Dendritic cell treated with granulocyte-macrophage colony-stimulating factor and Interleukin-4, amounts not matched to agents 40 ng/mL and 50 ng/mL, for 4 days (primary cell): ENCODE measurements at regions of chr6 and their contacts with region 1.

Region 1: GRCh38 chr6:158853072-158853871 is 34.1 kb upstream of the EZR start:
- H3K4me3 Mint-ChIP-seq: no peak overlapping the region
- H3K27ac Mint-ChIP-seq: no peak overlapping the region
- H3K4me1 Mint-ChIP-seq: peaks cover 45% of the 10 kb centered on the region
- H3K27me3 Mint-ChIP-seq: no peaks in the 10 kb centered on the region

Region 2: GRCh38 chr6:158819213-158819909 is 33.9 kb before region 1 on chr6 and contains the start of gene EZR:
- intact Hi-C with region 1: loop called (anchors 5 kb)
- H3K4me3 Mint-ChIP-seq: peak within 1 kb of the TSS; percentile 96
- H3K27ac Mint-ChIP-seq: peak within 1 kb of the TSS; percentile 90
- H3K4me1 Mint-ChIP-seq: peaks cover 32% of the 10 kb centered on the region
- H3K27me3 Mint-ChIP-seq: peaks cover 3% of the 10 kb centered on the region

Region 3: DNA sequence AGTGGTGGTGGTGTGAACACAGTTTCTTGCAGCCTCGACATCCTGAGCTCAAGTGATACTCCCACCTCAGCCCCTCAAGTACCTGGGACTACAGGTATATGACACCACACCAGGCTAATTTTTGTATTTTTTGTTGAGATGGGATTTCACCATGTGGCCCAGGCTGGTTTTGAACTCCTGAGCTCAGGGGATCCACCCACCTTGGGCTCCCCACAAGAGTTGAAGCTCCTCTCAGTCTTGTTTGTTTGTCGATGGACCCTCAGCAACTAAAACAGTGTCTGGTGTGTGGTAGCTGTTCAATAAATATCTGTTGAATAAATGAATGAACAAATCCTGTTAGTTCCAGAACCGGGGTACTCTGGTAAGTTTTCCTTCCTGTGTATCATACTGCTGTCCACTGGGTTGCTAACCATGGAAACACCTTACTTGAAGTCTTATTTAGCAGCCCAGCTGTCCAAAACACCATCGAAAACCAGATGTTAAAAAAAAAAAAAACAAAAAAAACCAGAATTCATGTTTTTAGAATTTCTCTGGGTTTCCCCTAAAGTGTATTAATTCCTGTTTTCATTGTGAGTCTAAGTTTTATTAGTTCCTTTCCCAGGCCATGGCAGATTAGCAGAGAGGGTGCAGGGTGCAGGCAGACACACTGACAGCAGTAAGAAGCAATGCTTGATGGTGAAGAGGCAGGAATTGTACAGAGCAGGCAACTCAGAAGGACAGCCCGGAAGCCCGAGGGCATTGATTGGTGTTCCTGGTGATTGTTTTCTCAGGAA is 26.3 kb before region 1 on chr6:
- intact Hi-C with region 1: loop called (anchors 2 kb)
- H3K4me3 Mint-ChIP-seq: no peak overlapping the region
- H3K27ac Mint-ChIP-seq: peak overlapping the region; percentile 62
- H3K4me1 Mint-ChIP-seq: peaks cover 27% of the 10 kb centered on the region
- H3K27me3 Mint-ChIP-seq: peaks cover 11% of the 10 kb centered on the region

Region 4: DNA sequence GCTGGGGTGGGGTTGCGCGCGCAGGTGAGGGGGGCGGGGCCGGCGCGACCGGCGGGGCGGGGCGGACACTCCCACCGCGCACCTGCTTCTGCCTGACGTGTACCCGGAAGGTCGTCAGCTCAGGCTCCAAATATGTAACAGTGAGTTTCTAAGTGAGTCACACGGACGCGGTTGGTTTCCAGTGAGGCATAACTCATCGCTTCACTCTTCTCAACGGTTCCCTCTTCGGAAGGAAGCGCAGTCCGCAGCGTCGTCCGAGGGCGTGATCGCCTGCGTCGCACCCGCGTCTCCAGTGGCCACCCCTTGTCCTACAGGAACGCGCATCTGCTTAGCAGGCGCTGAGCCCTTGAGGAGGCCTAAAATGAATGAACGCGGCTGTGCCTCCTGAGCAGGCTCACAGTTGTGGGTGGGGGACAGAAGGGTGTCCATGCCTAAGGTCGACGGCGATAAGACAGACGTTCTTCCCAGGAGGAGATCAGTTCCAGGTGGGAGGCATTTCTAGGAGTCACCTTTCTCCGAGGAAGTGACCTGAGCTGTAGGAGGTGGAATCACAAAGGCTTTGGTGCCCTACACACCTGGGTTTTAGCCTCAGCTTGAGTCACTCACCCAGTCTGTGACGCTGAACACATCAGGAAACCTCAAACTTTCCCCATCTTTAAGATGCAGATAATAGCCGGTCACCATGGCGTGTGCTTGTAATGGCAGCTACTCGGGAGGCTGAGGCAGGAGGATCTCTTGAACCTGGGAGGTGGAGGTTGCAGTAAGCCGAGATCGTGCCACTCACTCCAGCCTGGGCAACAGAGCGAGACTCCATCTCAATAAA is 16.8 kb after region 1 on chr6:
- intact Hi-C with region 1: loop called (anchors 1 kb)
- H3K4me3 Mint-ChIP-seq: peak overlapping the region; percentile 80
- H3K27ac Mint-ChIP-seq: peak overlapping the region; percentile 98
- H3K4me1 Mint-ChIP-seq: peaks cover 35% of the 10 kb centered on the region
- H3K27me3 Mint-ChIP-seq: peaks cover 7% of the 10 kb centered on the region

Region 5: DNA sequence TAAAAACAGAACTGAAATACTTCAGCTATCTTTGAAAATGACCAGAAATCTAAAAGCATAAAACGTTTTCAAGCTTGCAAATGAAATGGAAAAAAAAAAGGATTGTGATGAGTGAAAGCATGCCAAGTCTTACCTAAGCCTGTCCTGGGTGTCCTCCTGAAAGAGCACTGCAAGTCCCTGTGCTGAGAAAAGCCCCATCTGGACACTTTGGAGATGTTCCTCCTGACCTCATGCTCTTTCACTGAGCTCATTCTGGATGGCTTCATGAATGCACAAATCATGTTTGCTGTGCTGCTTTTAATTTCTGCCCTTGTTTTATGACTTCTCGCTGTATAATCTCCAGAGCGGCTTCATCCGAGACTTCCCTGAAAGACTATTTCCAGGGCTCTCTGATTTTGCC is 703.8 kb after region 1 on chr6:
- intact Hi-C with region 1: no loop called
- H3K4me3 Mint-ChIP-seq: no peak overlapping the region
- H3K27ac Mint-ChIP-seq: no peak overlapping the region
- H3K4me1 Mint-ChIP-seq: no peaks in the 10 kb centered on the region
- H3K27me3 Mint-ChIP-seq: no peaks in the 10 kb centered on the region